Heart left ventricle (tissue), 16 donors: ENCODE measurements at regions of chr12 and their contacts with region 1.

Region 1: DNA sequence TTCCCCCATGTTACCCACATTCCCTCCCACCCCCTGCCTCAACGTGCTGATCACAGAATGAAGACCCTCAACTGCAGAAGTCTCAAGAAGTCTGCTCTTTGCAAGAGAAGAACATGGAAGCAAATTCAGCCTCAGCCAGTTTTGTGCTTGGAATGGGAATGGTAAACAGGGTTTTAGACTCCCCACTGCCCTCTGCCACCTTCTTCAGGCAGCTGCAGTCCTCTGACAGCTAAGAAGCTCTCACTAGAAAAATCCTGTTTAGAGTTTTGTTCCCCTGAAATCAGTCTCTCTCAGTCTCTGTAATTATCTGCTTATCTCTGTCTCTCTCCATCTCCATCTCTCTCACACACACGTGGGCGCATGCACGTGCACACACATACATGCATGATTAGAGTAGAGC is 85.4 kb downstream of the CRACR2A start:
- DNase-seq: no peak
- ATAC-seq: no peak
- H3K4me3 ChIP-seq: no peak overlapping the region
- H3K27ac ChIP-seq: no peak overlapping the region
- H3K4me1 ChIP-seq: peaks cover 0 to 31% (median 4%) of the 10 kb centered on the region in 12 donors
- H3K27me3 ChIP-seq: no peaks in the 10 kb centered on the region
- CTCF ChIP-seq: no peak
- POLR2A ChIP-seq: no peak

Region 2: DNA sequence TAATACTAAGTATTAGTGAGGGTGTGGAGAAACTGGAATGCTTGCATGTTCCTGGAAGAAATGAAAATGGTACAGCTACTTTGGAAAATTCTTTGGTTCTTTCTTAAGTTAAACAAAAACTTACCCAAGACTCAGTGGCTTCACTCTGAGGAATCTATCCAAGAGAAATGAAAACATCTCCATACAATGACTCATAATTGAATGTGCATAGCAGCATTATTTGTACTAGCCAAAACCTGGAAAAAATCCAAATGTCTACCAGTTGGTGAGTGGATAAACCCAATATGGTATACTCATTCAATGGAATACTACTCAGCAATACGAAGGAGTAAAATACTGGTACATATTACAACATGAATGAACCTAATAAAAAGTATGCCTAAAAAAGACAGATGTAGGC is 103.4 kb after region 1 on chr12:
- intact Hi-C with region 1: loop called in 4 of 10 experiments (anchors 5 to 10 kb)
- DNase-seq: no peak
- ATAC-seq: no peak
- H3K4me3 ChIP-seq: no peak overlapping the region
- H3K27ac ChIP-seq: no peak overlapping the region
- H3K4me1 ChIP-seq: peaks cover 0 to 16% (median 6%) of the 10 kb centered on the region in 12 donors
- H3K27me3 ChIP-seq: no peaks in the 10 kb centered on the region
- CTCF ChIP-seq: no peak
- POLR2A ChIP-seq: no peak